ENCODE measurements at regions of chr5 and their contacts with region 1.

Region 1: DNA sequence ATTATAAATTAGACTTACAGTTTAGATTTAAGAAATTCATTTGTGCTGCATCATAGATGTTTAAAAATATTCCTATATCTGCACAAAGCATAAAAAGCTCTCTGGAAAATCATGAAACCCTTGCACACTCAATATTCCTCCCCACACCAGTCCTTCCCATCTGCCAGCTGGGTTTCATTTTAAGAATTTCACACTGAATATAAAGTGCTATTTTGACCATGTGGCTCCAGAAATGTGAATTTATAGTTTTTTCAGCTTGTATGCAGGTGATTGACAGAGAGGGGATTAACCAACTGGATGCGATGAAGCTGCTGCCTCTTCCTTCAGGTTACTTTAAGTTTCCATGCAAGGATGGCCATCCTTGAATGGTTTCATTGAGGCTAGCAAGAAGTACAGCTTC is 346.3 kb downstream of the NDUFS4 start:
- DNase-seq: no peak
- H3K4me3 ChIP-seq: no peak overlapping the region
- H3K27ac ChIP-seq: no peak overlapping the region
- H3K27me3 ChIP-seq: no peaks in the 10 kb centered on the region
- CTCF ChIP-seq: no peak

Region 2: GRCh38 chr5:53733852-53734251 is 172.9 kb before region 1 on chr5:
- CTCF ChIA-PET with region 1: no interaction called
- POLR2A ChIA-PET with region 1: no interaction called
- DNase-seq: no peak
- H3K4me3 ChIP-seq: no peak overlapping the region
- H3K27ac ChIP-seq: no peak overlapping the region
- H3K27me3 ChIP-seq: no peaks in the 10 kb centered on the region
- CTCF ChIP-seq: no peak

Region 3: GRCh38 chr5:53917095-53917494 is 10.4 kb after region 1 on chr5:
- CTCF ChIA-PET with region 1: interaction called, 12 read pairs
- POLR2A ChIA-PET with region 1: no interaction called
- DNase-seq: no peak
- H3K4me3 ChIP-seq: no peak overlapping the region
- H3K27ac ChIP-seq: no peak overlapping the region
- H3K27me3 ChIP-seq: no peaks in the 10 kb centered on the region
- CTCF ChIP-seq: peak; percentile 54

Measured in AG04450 (cell line).